ENCODE measurements at regions of chr21 and their contacts with region 1.

Region 1: DNA sequence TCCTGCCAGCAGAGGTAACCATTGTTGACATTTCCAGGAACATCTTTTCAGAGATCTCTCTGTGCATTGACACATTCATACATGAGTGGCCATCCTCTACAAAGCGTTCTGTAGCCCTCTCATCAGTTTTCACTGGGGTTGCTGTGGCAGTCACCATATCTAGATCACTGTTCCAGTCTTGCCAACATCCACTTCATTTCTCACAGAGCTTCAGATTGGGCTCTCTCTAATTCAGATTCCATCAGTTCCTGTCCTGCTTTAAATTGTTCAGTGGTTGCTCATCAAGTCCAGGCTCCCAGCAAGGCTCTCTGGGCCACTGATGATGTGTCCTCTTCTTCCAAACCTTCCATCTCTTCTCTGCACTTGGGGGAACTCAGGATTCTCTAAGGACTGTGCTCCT is 173.7 kb downstream of the KCNJ6 start:
- DNase-seq: no peak
- ATAC-seq: no peak
- H3K4me3 ChIP-seq: no peak overlapping the region
- H3K27ac ChIP-seq: no peak overlapping the region
- H3K4me1 ChIP-seq: peaks cover 4 to 5% of the 10 kb centered on the region in 2 donors
- H3K27me3 ChIP-seq: no peaks in the 10 kb centered on the region

Region 2: GRCh38 chr21:37546949-37547614 is 195.4 kb before region 1 on chr21:
- intact Hi-C with region 1: no loop called
- DNase-seq: peak in 1 of 2 donors; percentile 52
- ATAC-seq: peak; percentile 57
- H3K4me3 ChIP-seq: no peak overlapping the region
- H3K27ac ChIP-seq: no peak overlapping the region
- H3K4me1 ChIP-seq: no peaks in the 10 kb centered on the region
- H3K27me3 ChIP-seq: no peaks in the 10 kb centered on the region

Region 3: DNA sequence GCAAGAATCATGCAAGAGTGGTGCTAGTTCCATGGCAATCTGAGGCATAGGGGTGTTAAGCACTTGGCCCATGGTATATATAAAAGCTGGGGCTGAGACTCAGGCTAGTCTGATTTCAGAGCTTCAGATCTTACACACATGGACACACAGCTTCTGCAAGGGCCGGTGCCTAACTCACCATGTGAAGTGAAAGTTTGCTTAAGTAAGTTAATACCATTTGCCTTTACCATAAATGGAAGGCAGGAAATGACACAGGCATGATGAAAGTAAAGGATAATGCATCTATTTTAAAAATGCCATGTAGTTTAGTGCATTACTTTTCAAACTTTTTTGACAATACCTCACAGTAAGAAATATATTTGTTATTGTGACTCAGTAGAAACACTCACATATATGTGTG is 51.1 kb after region 1 on chr21:
- intact Hi-C with region 1: loop called in 1 of 2 experiments (anchors 5 kb)
- DNase-seq: no peak
- ATAC-seq: no peak
- H3K4me3 ChIP-seq: no peak overlapping the region
- H3K27ac ChIP-seq: no peak overlapping the region
- H3K4me1 ChIP-seq: peaks cover 0 to 4% of the 10 kb centered on the region in 2 donors
- H3K27me3 ChIP-seq: no peaks in the 10 kb centered on the region

Region 4: DNA sequence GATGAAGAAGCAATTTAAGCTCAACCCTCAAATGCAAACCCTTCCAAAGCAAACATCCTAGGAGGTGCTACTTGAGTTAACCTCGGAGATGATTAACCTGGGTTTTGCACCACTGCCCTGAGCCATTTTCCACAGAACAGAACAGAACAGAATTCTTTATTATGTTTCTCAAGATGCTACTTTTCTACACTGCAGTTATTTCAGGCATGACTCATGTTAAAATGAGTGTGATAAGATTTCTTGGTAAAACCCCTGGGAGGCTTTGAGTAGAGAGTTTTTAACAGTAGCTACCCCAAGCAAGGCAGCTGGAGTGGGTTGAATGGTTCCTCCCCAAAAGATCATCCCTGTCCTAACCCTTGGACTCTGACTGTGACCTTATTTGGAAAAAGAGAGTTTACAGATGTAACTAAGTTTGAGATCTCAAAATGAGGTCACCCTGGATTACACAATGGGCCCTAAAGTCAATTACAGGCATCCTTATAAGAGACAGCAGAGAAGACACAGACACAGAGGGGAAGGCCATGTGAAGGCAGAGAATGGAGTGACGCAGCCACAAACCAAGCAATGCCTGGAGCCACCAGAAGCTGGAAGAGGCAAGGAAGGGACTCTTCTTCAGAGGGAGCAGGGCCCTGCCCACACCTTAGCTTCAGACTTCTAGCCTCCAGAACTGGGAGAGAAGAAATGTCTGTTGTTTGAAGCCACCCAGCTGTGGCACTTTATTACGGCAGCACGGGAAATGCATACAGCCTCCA is 1216.6 kb after region 1 on chr21:
- intact Hi-C with region 1: no loop called
- DNase-seq: no peak
- ATAC-seq: peak; percentile 73
- H3K4me3 ChIP-seq: no peak overlapping the region
- H3K27ac ChIP-seq: no peak overlapping the region
- H3K4me1 ChIP-seq: no peaks in the 10 kb centered on the region
- H3K27me3 ChIP-seq: no peaks in the 10 kb centered on the region

Measured in aorta (tissue), 5 donors.